A673 (cell line): ENCODE measurements at regions of chr15 and their contacts with region 1.

Region 1: DNA sequence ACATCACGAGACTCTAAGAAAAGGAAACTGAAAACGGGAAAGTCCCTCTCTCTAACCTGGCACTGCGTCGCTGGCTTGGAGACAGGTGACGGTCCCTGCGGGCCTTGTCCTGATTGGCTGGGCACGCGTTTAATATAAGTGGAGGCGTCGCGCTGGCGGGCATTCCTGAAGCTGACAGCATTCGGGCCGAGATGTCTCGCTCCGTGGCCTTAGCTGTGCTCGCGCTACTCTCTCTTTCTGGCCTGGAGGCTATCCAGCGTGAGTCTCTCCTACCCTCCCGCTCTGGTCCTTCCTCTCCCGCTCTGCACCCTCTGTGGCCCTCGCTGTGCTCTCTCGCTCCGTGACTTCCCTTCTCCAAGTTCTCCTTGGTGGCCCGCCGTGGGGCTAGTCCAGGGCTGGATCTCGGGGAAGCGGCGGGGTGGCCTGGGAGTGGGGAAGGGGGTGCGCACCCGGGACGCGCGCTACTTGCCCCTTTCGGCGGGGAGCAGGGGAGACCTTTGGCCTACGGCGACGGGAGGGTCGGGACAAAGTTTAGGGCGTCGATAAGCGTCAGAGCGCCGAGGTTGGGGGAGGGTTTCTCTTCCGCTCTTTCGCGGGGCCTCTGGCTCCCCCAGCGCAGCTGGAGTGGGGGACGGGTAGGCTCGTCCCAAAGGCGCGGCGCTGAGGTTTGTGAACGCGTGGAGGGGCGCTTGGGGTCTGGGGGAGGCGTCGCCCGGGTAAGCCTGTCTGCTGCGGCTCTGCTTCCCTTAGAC is at the start of gene B2M:
- DNase-seq: peak; percentile 98
- H3K4me3 ChIP-seq: peak within 1 kb of the TSS; percentile 88
- H3K27ac ChIP-seq: peak within 1 kb of the TSS; percentile 94
- H3K4me1 ChIP-seq: peaks cover 30% of the 10 kb centered on the region
- H3K27me3 ChIP-seq: no peaks in the 10 kb centered on the region
- CTCF ChIP-seq: no peak
- total RNA-seq, gene B2M: 1,596 and 1,873 TPM in 2 replicates

Region 2: GRCh38 chr15:44663409-44664308 is 47.9 kb before region 1 on chr15 and contains the start of gene SPG11:
- CTCF ChIA-PET with region 1: interaction called, 5 read pairs
- POLR2A ChIA-PET with region 1: interaction called, 5 read pairs
- intact Hi-C with region 1: loop called (anchors 5 kb)
- DNase-seq: peak; percentile 98
- H3K4me3 ChIP-seq: peak within 1 kb of the TSS; percentile 71
- H3K27ac ChIP-seq: peak within 1 kb of the TSS; percentile 90
- H3K4me1 ChIP-seq: peaks cover 11% of the 10 kb centered on the region
- H3K27me3 ChIP-seq: no peaks in the 10 kb centered on the region
- CTCF ChIP-seq: peak; percentile 91
- total RNA-seq, gene SPG11: 55.4 and 68.5 TPM in 2 replicates

Region 3: GRCh38 chr15:44779761-44780160 is 68.2 kb after region 1 on chr15:
- CTCF ChIA-PET with region 1: no interaction called
- POLR2A ChIA-PET with region 1: no interaction called
- intact Hi-C with region 1: loop called (anchors 2 kb)
- DNase-seq: no peak
- H3K4me3 ChIP-seq: no peak overlapping the region
- H3K27ac ChIP-seq: no peak overlapping the region
- H3K4me1 ChIP-seq: peaks cover 7% of the 10 kb centered on the region
- H3K27me3 ChIP-seq: no peaks in the 10 kb centered on the region
- CTCF ChIP-seq: no peak